Pancreas (tissue), 10 donors: ENCODE measurements at regions of chr22 and their contacts with region 1.

Region 1: DNA sequence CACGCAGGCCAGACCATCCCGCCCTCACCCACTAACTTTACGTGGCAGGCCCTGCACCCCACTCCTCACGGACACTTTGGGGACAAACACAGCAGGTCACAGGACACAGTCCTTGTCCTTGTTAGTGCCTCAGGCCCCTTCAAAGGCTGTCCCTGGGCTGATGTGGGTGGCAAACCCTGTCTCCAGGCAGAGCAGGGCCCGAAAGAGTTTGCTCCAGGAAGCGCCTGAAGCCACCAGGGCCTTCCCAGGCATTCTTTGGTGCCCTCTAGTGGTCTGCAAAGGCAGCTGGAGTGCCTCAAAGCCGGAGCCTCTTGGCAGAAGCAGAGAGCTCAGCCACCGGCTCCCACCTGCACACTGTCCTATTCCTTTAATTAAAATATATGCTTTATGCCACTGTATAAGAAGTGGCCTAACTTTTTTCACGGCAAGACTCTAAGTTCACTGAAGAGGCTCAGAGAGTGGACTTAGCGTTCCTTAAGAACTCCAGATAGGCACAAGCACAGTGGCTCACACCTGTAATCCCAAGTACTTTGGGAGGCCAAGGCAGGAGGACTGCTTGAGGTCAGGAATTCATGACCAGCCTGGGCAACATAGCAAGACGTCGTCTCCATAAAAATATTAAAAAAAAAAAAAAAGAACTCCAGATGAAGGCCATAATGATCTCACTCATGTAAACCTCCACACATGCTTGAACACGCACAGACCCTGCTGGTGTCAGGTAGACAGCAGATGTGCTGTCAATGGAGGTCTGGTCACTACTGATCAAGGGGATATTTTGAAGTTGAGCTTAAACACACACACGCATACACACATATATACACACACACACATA is 11.1 kb downstream of the TXN2 start:
- DNase-seq: peak; percentile 78 to 92 (median 80)
- ATAC-seq: peak; percentile 51 to 81 (median 78)
- H3K4me3 ChIP-seq: no peak overlapping the region
- H3K27ac ChIP-seq: peak overlapping the region in 1 of 4 donors; percentile 23
- H3K4me1 ChIP-seq: peaks cover 8 to 18% (median 8%) of the 10 kb centered on the region in 3 donors
- H3K27me3 ChIP-seq: no peaks in the 10 kb centered on the region
- CTCF ChIP-seq: peak; percentile 89 to 97 (median 92)

Region 2: DNA sequence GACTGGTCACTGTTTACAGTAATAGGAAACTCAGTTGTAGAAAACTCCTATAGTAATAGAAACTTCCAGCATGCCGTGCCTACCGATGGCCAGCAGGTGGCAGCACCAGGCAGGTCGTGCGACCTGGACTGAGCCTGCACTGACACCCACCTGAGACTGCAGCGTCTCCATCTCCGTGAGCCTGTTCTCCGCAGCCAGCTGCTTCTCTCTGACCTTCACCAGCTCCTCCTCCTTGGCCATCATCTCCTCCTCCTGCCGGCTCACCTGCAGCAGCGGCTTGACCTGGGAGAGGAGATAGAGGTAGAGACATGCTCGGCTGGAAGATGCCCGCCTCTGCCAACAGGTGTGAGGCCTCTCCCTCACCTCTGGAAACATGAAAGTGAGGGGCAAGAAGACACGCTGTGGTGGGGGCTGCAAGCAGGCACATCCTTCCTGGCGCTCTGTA is 169.0 kb before region 1 on chr22:
- intact Hi-C with region 1: loop called (anchors 5 to 10 kb)
- DNase-seq: peak; percentile 55 to 92 (median 82)
- ATAC-seq: peak; percentile 61 to 86 (median 84)
- H3K4me3 ChIP-seq: no peak overlapping the region
- H3K27ac ChIP-seq: no peak overlapping the region
- H3K4me1 ChIP-seq: no peaks in the 10 kb centered on the region
- H3K27me3 ChIP-seq: no peaks in the 10 kb centered on the region
- CTCF ChIP-seq: peak; percentile 89 to 96 (median 92)

Region 3: DNA sequence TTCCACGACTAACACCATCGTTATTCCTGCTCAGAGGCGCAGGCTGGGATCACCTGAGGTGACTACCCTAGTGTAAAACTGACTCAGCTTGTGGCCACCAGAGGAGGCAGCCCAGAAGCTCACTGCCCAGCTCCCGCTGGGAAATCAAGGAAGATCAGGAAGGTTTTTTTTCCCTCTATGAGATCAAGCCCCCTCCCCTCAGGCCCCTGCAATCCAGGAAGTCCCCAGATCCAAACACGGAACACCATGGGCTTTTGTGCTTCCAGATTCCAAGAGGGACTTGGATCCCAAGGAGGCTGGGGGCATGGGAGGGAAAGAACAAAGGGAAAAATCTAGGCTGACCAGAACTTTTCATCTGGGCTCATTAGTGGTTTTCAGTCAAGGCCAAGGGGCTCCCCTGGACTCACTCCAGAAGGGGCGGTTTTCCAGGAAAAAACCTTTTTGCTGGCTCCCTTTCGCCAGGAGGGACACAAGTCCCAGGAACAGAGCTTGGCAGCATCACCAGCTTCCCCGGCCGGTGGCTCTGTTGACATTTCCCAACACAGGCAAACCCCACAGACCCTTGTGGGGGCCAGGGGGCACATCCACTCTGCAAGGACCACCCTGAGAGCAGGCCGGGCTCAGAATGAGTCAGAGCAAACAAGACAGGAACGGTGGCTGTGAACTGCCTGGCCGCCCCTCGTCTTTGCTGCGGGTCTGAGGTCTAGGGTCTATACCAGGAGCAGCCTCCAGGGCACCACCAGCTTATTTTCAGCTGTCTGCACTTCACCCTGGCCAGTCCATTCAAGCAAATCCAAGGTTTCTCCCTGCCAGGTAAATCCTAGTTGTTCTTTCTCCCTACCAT is 119.4 kb before region 1 on chr22:
- intact Hi-C with region 1: no loop called
- DNase-seq: peak in 1 of 6 donors; percentile 63
- ATAC-seq: peak; percentile 9 to 25 (median 20)
- H3K4me3 ChIP-seq: peak overlapping the region in 1 of 4 donors; percentile 2
- H3K27ac ChIP-seq: peak overlapping the region; percentile 82 to 95 (median 93)
- H3K4me1 ChIP-seq: peaks cover 44 to 66% (median 54%) of the 10 kb centered on the region in 3 donors
- H3K27me3 ChIP-seq: no peaks in the 10 kb centered on the region
- CTCF ChIP-seq: no peak

Region 4: GRCh38 chr22:37043828-37044538 is 573.6 kb after region 1 on chr22:
- intact Hi-C with region 1: no loop called
- DNase-seq: peak; percentile 83 to 96 (median 88)
- ATAC-seq: peak; percentile 95 to 99 (median 98)
- H3K4me3 ChIP-seq: peak overlapping the region in 2 of 4 donors; percentile 5 to 10
- H3K27ac ChIP-seq: peak overlapping the region in 2 of 4 donors; percentile 29 to 56
- H3K4me1 ChIP-seq: peaks cover 0 to 7% (median 6%) of the 10 kb centered on the region in 3 donors
- H3K27me3 ChIP-seq: no peaks in the 10 kb centered on the region
- CTCF ChIP-seq: peak; percentile 77 to 88 (median 81)